ENCODE measurements at regions of chr6 and their contacts with region 1.

Region 1: GRCh38 chr6:129186988-129187387 is 304.1 kb downstream of the LAMA2 start:
- DNase-seq: no peak
- H3K4me3 ChIP-seq: no peak overlapping the region
- H3K27ac ChIP-seq: no peak overlapping the region
- H3K4me1 ChIP-seq: peaks cover 0 to 12% (median 0%) of the 10 kb centered on the region in 4 donors
- H3K27me3 ChIP-seq: no peaks in the 10 kb centered on the region
- CTCF ChIP-seq: no peak
- EP300 ChIP-seq: no peak
- POLR2A ChIP-seq: no peak

Region 2: GRCh38 chr6:129133770-129134192 is 53.2 kb before region 1 on chr6:
- in situ Hi-C with region 1: no loop called
- intact Hi-C with region 1: loop called (anchors 2 kb)
- DNase-seq: no peak
- H3K4me3 ChIP-seq: no peak overlapping the region
- H3K27ac ChIP-seq: peak overlapping the region in 2 of 4 donors; percentile 24 to 47
- H3K4me1 ChIP-seq: peaks cover 0 to 5% (median 0%) of the 10 kb centered on the region in 4 donors
- H3K27me3 ChIP-seq: no peaks in the 10 kb centered on the region
- CTCF ChIP-seq: no peak
- EP300 ChIP-seq: no peak
- POLR2A ChIP-seq: no peak

Region 3: GRCh38 chr6:129251669-129252376 is 64.8 kb after region 1 on chr6:
- in situ Hi-C with region 1: no loop called
- intact Hi-C with region 1: no loop called
- DNase-seq: peak; percentile 80
- H3K4me3 ChIP-seq: no peak overlapping the region
- H3K27ac ChIP-seq: peak overlapping the region in 2 of 4 donors; percentile 43 to 46
- H3K4me1 ChIP-seq: peaks cover 0 to 30% (median 14%) of the 10 kb centered on the region in 4 donors
- H3K27me3 ChIP-seq: no peaks in the 10 kb centered on the region
- CTCF ChIP-seq: peak; percentile 75 to 86 (median 81)
- EP300 ChIP-seq: no peak
- POLR2A ChIP-seq: no peak

Region 4: DNA sequence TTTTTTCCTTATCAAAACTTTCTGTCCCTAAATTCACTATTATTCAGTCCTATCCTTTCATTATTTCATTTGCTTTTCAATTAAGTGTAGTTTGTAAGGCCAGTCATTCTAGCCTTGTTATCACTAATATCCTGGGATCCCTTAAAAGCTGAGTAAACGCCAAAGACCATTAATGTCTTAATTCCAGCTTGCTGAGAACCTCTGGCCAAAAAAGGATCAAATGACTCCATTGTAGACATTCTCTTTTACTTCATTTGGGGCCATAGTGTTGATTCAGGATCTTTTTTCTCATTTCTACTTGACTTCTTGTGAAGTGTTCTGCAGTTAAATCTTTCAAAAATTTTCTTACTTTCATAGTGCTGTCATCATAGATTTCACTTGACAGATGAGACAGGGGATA is 75.7 kb after region 1 on chr6:
- in situ Hi-C with region 1: no loop called
- intact Hi-C with region 1: no loop called
- DNase-seq: no peak
- H3K4me3 ChIP-seq: no peak overlapping the region
- H3K27ac ChIP-seq: no peak overlapping the region
- H3K4me1 ChIP-seq: no peaks in the 10 kb centered on the region
- H3K27me3 ChIP-seq: no peaks in the 10 kb centered on the region
- CTCF ChIP-seq: no peak
- EP300 ChIP-seq: no peak
- POLR2A ChIP-seq: no peak

Measured in transverse colon (tissue), 4 donors.